HEK293 (cell line): ENCODE measurements at regions of chr20 and their contacts with region 1.

Region 1: GRCh38 chr20:45362804-45363610 is at the start of gene SYS1:
- H3K4me3 ChIP-seq: peak within 1 kb of the TSS; percentile 66
- H3K27ac ChIP-seq: peak within 1 kb of the TSS; percentile 31; the same call in 1 of the 2 replicates
- H3K4me1 ChIP-seq: no peaks in the 10 kb centered on the region; the same call in 1 of the 2 replicates
- CTCF ChIP-seq: peak; percentile 100

Region 2: DNA sequence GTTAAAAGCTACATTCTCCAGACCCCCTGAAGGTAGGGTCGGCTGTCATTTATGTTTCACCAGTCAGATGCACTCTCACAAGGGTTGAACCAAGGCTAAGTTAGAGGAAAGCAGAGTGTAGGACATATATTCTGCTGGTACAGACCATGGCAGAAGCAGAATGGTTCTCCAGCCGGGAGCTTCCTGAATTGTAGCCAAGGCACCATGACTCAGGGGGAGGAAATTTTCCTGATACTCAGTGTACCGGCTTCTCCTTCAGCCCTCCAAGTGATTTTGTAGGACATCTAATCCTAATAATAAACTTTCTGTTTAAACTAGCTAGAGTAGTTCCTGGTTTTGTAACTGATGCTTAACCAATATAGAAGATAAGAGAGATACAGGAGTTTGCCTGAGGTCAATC is 94.5 kb before region 1 on chr20:
- CTCF ChIA-PET with region 1: no interaction called
- POLR2A ChIA-PET with region 1: no interaction called
- H3K4me3 ChIP-seq: no peak overlapping the region
- H3K27ac ChIP-seq: no peak overlapping the region
- H3K4me1 ChIP-seq: no peaks in the 10 kb centered on the region
- CTCF ChIP-seq: no peak

Region 3: DNA sequence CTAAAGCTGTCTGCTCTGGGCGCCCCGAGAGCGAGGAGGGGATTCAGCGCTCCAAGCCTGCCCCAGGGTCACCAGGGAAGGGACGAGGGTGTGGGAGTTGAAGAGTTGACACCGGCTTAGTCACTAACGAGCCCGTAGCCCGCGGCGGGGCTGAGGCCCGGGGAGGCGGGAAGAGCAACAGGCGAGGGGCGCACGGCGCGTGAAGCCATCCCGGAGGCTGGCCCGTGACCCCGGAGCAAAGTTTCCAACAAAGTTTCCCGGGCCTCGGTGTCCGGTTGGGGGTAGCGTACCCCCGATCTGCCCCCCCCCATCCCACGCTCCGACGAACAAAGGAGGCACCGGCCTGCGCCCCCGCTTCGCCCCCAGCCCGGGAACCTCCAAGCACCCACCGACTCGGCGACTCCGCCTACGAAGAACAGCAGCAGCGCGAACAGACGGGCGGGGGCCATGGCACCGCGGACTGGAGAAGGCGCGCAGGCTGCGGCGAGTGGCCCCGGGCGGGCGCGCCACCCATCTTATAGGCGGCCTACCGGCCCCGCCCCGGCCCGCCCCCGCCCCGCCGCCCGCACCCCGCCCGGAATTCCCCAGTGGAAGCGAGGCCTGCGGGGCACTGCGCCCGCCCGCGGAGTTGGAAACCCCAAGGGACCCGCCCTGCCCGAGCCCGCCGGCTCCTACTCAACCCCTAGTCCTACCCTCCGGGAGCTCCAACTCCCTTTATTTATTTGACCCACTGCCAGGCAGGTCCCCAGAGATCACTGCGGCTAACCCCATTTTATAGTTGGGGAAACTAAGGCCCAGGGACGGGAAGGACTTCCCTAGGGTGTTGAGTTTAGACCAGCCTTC is 14.8 kb before region 1 on chr20 and contains the start of gene SDC4:
- CTCF ChIA-PET with region 1: interaction called, 13 read pairs
- POLR2A ChIA-PET with region 1: interaction called, 31 read pairs
- H3K4me3 ChIP-seq: peak within 1 kb of the TSS; percentile 52
- H3K27ac ChIP-seq: peak within 1 kb of the TSS; percentile 45; the same call in 1 of the 2 replicates
- H3K4me1 ChIP-seq: peaks cover 21% of the 10 kb centered on the region
- CTCF ChIP-seq: no peak

Region 4: DNA sequence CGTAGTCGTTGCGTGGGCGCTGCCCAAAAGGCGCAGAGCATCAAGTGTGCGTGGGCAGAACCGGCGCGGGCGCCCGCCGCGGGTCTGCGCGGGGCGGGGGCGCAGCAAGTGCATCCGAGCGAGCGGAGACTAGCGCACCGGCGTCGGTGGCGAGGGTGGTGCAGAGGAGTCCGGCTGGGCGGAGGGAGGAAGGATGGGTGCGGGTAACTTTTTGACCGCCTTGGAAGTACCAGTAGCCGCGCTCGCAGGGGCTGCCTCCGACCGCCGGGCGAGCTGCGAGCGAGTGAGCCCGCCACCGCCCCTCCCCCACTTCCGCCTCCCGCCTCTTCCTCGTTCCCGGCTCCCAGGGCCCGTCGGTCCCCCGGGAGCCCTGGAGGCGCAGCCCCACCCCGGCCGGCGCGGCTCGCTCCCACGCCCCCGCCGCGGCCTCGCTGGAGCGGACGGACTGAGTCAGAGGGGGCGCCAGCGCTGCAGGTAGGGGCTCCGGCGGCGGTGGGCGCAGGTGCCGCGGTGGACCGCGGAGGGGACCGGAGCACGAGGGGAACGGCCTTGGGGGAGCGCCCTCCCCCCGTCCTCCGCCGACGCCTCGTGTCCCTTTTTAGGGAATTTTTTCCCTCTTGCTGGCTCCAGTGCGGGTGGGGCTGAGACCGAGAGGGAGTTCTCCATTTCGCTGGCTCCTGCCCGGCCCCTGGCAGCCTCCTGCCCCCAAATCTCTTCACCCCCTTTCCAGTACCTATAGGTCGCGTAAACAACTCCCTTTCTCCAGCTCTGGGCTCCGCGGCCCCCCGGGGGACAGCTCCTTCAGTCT is 43.5 kb after region 1 on chr20:
- CTCF ChIA-PET with region 1: interaction called, 6 read pairs
- POLR2A ChIA-PET with region 1: interaction called, 14 read pairs
- H3K4me3 ChIP-seq: peak overlapping the region; percentile 71
- H3K27ac ChIP-seq: peak overlapping the region; percentile 92
- H3K4me1 ChIP-seq: peaks cover 10% of the 10 kb centered on the region
- CTCF ChIP-seq: peak; percentile 30; the same call in 1 of the 2 replicates

Region 5: DNA sequence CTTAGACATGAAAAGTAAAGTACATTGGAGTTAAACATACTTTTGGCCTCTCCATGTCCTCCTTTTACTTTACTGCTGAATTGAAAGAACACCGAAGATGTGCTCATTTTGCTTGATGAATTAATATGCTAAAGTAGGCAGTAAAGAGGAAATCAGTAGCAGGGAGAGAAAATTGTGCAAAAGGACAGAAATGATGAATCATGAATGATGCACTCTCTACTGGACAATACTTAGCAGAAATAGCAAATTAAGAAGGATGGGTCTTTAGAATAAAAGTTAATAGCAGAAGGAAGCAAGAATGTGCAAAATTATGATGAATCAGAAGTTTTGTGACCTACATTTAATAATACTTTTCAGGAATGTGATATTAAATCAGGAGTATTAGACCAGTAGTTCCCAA is 160.8 kb after region 1 on chr20:
- CTCF ChIA-PET with region 1: no interaction called
- POLR2A ChIA-PET with region 1: no interaction called
- H3K4me3 ChIP-seq: no peak overlapping the region
- H3K27ac ChIP-seq: no peak overlapping the region
- H3K4me1 ChIP-seq: no peaks in the 10 kb centered on the region
- CTCF ChIP-seq: no peak